ENCODE measurements at regions of chr3 and their contacts with region 1.

Region 1: DNA sequence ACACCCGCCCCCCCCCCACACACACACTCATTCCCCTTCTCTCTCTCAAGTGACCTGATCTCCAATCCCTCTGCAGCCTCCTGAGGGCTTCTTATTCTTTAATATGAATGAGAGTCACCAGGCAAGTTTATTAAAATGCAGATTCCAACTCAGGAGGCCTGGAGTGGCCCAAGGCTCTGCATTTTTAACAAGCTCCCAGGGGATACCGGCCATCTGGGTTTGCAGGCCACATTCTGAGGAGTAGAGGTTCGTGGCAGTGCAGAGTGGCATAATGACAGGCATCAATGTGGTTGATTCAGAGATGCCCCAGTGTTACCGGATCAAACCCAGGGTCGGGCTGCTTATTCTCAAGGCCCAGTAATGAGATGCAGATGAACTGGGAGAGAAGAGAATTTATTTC is 18.9 kb downstream of the EIF1B start:
- DNase-seq: no peak
- ATAC-seq: no peak
- H3K4me3 ChIP-seq: no peak overlapping the region
- H3K4me3 Mint-ChIP-seq: no peak overlapping the region
- H3K27ac ChIP-seq: no peak overlapping the region
- H3K27ac Mint-ChIP-seq: no peak overlapping the region
- H3K4me1 ChIP-seq: no peaks in the 10 kb centered on the region
- H3K4me1 Mint-ChIP-seq: peaks cover 0 to 4% (median 4%) of the 10 kb centered on the region in 3 donors
- H3K27me3 ChIP-seq: no peaks in the 10 kb centered on the region
- H3K27me3 Mint-ChIP-seq: peaks cover 0 to 4% of the 10 kb centered on the region in 2 donors

Region 2: GRCh38 chr3:39801216-39801615 is 527.2 kb before region 1 on chr3:
- CTCF ChIA-PET with region 1: no interaction called
- POLR2A ChIA-PET with region 1: interaction called in 1 of 2 experiments, 11 read pairs
- DNase-seq: no peak
- ATAC-seq: no peak
- H3K4me3 ChIP-seq: no peak overlapping the region
- H3K4me3 Mint-ChIP-seq: no peak overlapping the region
- H3K27ac ChIP-seq: no peak overlapping the region
- H3K27ac Mint-ChIP-seq: no peak overlapping the region
- H3K4me1 ChIP-seq: no peaks in the 10 kb centered on the region
- H3K4me1 Mint-ChIP-seq: no peaks in the 10 kb centered on the region
- H3K27me3 ChIP-seq: peaks cover 0 to 3% of the 10 kb centered on the region in 2 experiments
- H3K27me3 Mint-ChIP-seq: peaks cover 12 to 35% of the 10 kb centered on the region in 2 donors

Region 3: GRCh38 chr3:40930131-40930538 is 601.8 kb after region 1 on chr3:
- CTCF ChIA-PET with region 1: no interaction called
- POLR2A ChIA-PET with region 1: no interaction called
- DNase-seq: peak in 1 of 35 experiments; percentile 13
- ATAC-seq: no peak
- H3K4me3 ChIP-seq: no peak overlapping the region
- H3K4me3 Mint-ChIP-seq: no peak overlapping the region
- H3K27ac ChIP-seq: no peak overlapping the region
- H3K27ac Mint-ChIP-seq: no peak overlapping the region
- H3K4me1 ChIP-seq: no peaks in the 10 kb centered on the region
- H3K4me1 Mint-ChIP-seq: no peaks in the 10 kb centered on the region
- H3K27me3 ChIP-seq: peaks cover 0 to 2% of the 10 kb centered on the region in 2 experiments
- H3K27me3 Mint-ChIP-seq: peaks cover 24 to 34% of the 10 kb centered on the region in 2 donors

Measured in T-cell (primary cell).